SK-N-SH (cell line): ENCODE measurements at regions of chr3 and their contacts with region 1.

Region 1: GRCh38 chr3:87167628-87168456 is 59.3 kb upstream of the CHMP2B start:
- DNase-seq: peak; percentile 1
- H3K4me3 ChIP-seq: peak overlapping the region; percentile 42 to 56; a peak in 3 of 4 replicates
- H3K27ac ChIP-seq: no peak overlapping the region
- H3K4me1 ChIP-seq: no peaks in the 10 kb centered on the region
- H3K27me3 ChIP-seq: peaks cover 4% of the 10 kb centered on the region; the same call in 1 of the 2 replicates
- CTCF ChIP-seq: peak; percentile 71
- EP300 ChIP-seq: no peak
- RAD21 ChIP-seq: peak; percentile 56

Region 2: DNA sequence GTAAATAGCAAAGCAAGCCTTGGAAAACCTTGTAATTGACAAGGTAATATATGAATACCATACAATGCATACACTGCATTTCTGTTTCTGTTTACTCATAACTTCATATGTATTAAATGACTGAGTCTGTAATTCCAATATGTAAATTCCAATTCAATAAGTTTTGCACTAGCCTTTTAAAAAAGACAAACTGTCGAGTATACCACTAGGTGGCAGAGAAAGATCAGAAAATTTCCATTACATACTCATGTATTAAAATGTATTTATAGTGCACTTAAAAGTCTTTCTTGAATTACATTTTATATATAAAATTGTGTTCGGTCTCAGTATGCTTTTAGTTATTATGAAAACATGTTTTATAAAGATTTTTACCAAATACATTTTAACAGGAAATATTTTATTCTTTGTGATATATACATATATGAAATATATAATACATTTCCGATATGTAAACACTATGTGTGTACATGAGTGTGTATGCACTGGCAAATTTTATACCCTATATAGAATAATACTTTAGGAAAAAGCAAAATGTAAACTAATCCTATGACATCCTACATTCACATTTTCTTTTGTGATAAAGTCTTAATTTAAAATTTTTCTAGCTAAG is 393.7 kb before region 1 on chr3:
- CTCF ChIA-PET with region 1: interaction called, 22 read pairs
- POLR2A ChIA-PET with region 1: no interaction called
- DNase-seq: no peak
- H3K4me3 ChIP-seq: no peak overlapping the region
- H3K27ac ChIP-seq: no peak overlapping the region
- H3K4me1 ChIP-seq: no peaks in the 10 kb centered on the region
- H3K27me3 ChIP-seq: peaks cover 22% of the 10 kb centered on the region; the same call in 1 of the 2 replicates
- CTCF ChIP-seq: peak; percentile 74
- EP300 ChIP-seq: no peak
- RAD21 ChIP-seq: peak; percentile 65

Region 3: DNA sequence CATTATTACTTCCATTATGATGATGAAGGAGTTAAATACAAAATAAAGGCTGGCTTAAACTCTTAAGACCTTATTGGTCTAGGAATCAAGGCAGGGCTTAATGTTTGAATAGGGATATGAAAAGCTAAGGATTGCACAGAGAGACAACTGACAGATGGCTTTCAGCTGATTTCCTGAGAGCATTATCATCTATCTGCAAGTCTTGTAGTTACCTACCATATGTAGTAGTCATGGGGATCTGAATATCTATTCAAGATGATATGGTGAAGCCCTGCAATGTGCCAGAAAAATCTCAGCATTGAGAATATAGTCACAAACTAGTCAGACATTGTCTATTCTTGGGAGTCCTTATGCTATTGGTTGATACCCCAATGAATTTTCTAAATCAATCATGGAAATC is 11.8 kb after region 1 on chr3:
- CTCF ChIA-PET with region 1: interaction called, 27 read pairs
- POLR2A ChIA-PET with region 1: no interaction called
- DNase-seq: no peak
- H3K4me3 ChIP-seq: no peak overlapping the region
- H3K27ac ChIP-seq: no peak overlapping the region
- H3K4me1 ChIP-seq: peaks cover 0 to 10% of the 10 kb centered on the region in 2 experiments; a peak in 1 of 4 replicates
- H3K27me3 ChIP-seq: peaks cover 9% of the 10 kb centered on the region; the same call in 1 of the 2 replicates
- CTCF ChIP-seq: no peak
- EP300 ChIP-seq: no peak
- RAD21 ChIP-seq: no peak